PC-3 (cell line): ENCODE measurements at regions of chr13 and their contacts with region 1.

Region 1: GRCh38 chr13:98454389-98454881 is 122.5 kb downstream of the STK24 start:
- DNase-seq: peak; percentile 34
- ATAC-seq: peak; percentile 22; the same call in 1 of the 2 replicates
- H3K4me3 ChIP-seq: no peak overlapping the region
- H3K27ac ChIP-seq: no peak overlapping the region
- H3K4me1 ChIP-seq: no peaks in the 10 kb centered on the region
- H3K27me3 ChIP-seq: no peaks in the 10 kb centered on the region
- CTCF ChIP-seq: no peak

Region 2: GRCh38 chr13:98672944-98673545 is 218.6 kb after region 1 on chr13:
- CTCF ChIA-PET with region 1: interaction called, 4 read pairs
- POLR2A ChIA-PET with region 1: no interaction called
- intact Hi-C with region 1: loop called (anchors 5 kb)
- DNase-seq: peak; percentile 79
- ATAC-seq: peak; percentile 94
- H3K4me3 ChIP-seq: peak overlapping the region; percentile 57; the same call in 1 of the 2 replicates
- H3K27ac ChIP-seq: 0 out of 2 replicates have a peak overlapping the region, but pooled peaks have one; percentile 8
- H3K4me1 ChIP-seq: peaks cover 11% of the 10 kb centered on the region
- H3K27me3 ChIP-seq: no peaks in the 10 kb centered on the region
- CTCF ChIP-seq: peak; percentile 91